CD14-positive monocyte (primary cell): ENCODE measurements at regions of chr3 and their contacts with region 1.

Region 1: GRCh38 chr3:50652709-50653108 is 22.0 kb upstream of the DOCK3 start:
- DNase-seq: peak in 2 of 3 donors; percentile 47 to 50
- H3K4me3 ChIP-seq: no peak overlapping the region
- H3K4me3 Mint-ChIP-seq: no peak overlapping the region
- H3K27ac ChIP-seq: no peak overlapping the region
- H3K27ac Mint-ChIP-seq: no peak overlapping the region
- H3K4me1 ChIP-seq: peaks cover 8 to 15% of the 10 kb centered on the region in 2 donors
- H3K4me1 Mint-ChIP-seq: peaks cover 22% of the 10 kb centered on the region
- H3K27me3 ChIP-seq: no peaks in the 10 kb centered on the region
- H3K27me3 Mint-ChIP-seq: peaks cover 0 to 10% (median 2%) of the 10 kb centered on the region in 3 donors
- CTCF ChIP-seq: peak; percentile 50

Region 2: DNA sequence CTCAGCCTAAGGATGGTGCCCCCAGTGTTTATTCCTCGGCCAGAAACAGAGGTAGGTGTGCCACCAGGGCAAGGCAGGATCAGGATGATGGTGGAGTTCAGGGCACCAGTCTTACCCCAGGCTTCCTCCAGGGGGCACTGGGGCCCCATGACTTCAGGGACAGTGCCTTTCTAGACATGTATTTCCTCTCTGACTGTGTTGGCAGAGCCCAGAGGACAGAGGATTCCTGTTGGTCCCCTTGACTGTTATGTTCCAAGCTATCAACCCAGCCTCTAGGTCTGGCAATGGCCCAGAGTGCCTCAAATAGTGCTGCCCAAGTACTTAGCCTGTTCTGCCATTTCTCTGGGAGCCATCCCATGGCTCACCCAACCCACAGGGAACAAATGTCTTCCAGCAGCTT is 80.6 kb before region 1 on chr3:
- intact Hi-C with region 1: loop called in 1 of 2 experiments (anchors 10 kb)
- DNase-seq: peak; percentile 71 to 81 (median 75)
- H3K4me3 ChIP-seq: no peak overlapping the region
- H3K4me3 Mint-ChIP-seq: no peak overlapping the region
- H3K27ac ChIP-seq: peak overlapping the region in 1 of 2 donors; percentile 14
- H3K27ac Mint-ChIP-seq: peak overlapping the region in 3 of 7 donors; percentile 36 to 73 (median 65)
- H3K4me1 ChIP-seq: peaks cover 24 to 46% of the 10 kb centered on the region in 2 donors
- H3K4me1 Mint-ChIP-seq: peaks cover 38% of the 10 kb centered on the region
- H3K27me3 ChIP-seq: no peaks in the 10 kb centered on the region
- H3K27me3 Mint-ChIP-seq: peaks cover 0 to under 1% (median 0%) of the 10 kb centered on the region in 3 donors
- CTCF ChIP-seq: peak; percentile 95